Posterior vena cava (tissue), 2 donors: ENCODE measurements at regions of chr2 and their contacts with region 1.

Region 1: GRCh38 chr2:11344342-11344955 is at the start of gene ROCK2:
- DNase-seq: peak; percentile 95
- total RNA-seq, gene ROCK2: 109 to 186 TPM

Region 2: GRCh38 chr2:11234309-11234708 is 110.1 kb before region 1 on chr2:
- intact Hi-C with region 1: loop called in 1 of 2 experiments (anchors 10 kb)
- DNase-seq: no peak

Region 3: DNA sequence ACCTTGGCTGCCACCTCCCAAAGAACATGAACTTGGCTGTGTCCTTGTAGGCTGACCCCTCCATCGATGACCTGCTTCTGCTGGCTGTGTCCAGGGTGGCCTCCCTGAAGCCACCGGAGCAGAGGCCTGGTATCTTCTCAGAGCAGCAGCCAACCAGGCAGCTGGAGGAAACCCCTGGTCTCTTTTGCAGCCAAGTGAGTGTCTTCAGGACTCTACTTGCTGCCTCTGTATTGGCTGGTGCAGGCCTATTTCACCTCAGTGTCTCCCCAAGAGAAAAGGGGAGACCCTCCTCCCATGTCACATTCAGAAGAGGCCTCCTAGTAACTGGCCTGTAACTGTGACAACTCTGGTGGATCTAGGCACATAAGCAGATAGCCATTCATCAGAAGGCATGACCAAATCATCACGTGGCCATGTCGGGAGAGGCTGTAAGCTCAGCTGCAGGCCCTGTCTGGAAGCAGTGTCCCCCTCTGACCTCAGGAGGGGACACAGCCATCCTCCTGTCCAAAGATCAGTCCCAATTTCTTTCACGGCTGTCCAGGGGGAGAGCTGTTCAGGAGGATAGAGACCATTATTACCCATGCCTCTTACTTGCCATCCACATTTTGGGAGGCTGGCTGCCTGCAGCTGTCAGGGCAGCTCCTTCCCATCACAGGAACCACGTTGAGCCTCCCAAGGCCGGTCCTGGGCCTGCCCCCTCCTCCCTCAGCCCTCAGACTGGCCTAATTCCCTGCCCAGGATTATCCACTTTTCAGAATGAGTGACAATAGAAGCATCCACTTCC is 20.8 kb after region 1 on chr2:
- intact Hi-C with region 1: loop called in 1 of 2 experiments (anchors 2 kb)
- DNase-seq: no peak

Region 4: DNA sequence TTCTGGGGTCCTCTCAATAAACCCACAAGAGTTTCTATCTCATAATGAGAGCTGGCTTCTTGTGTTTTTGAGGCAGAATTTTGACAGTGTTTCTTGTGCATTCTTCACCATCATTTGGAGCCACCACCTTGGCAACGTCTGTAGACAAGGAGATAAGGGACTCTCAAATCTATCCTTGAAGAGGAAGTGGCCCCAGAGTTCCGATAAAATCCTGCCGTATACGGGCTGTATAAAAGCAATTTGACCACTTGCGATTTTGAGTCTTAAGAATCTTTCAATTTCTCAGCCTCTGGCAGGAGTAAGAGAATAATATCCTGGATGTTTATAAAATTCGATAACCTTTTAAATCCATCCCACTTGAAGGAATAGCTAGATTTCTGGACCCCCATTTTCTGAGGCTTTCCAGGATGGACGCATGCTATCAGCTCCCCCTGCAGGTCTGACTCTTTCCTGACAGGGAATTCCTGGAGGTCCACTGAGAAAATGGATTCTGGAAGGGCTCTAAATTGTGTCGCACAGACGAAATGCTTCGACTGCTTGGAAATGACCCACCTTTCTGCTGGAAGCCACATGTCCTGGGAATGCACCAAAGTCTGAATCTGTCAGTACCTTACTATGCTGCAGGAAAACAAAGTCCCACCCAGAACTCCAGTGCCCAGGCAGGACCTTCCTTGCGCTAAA is 67.5 kb after region 1 on chr2:
- intact Hi-C with region 1: loop called (anchors 5 to 10 kb)
- DNase-seq: no peak